ENCODE measurements at regions of chr16 and their contacts with region 1.

Region 1: GRCh38 chr16:75555707-75556430 is at the start of gene TMEM231:
- DNase-seq: peak; percentile 99
- H3K4me3 ChIP-seq: peak within 1 kb of the TSS; percentile 59 to 100 (median 81)
- H3K27ac ChIP-seq: peak within 1 kb of the TSS; percentile 38 to 84 (median 80)
- H3K4me1 ChIP-seq: peaks cover 6 to 31% (median 20%) of the 10 kb centered on the region in 6 donors
- H3K27me3 ChIP-seq: peaks cover 0 to 5% (median 0%) of the 10 kb centered on the region in 7 donors
- CTCF ChIP-seq: peak in 2 of 11 experiments; percentile 7 to 32
- POLR2A ChIP-seq: no peak
- total RNA-seq, gene TMEM231: 2.7 to 6.7 (median 3.5) TPM

Region 2: GRCh38 chr16:75464130-75464918 is 91.5 kb before region 1 on chr16 and contains the start of gene TMEM170A:
- intact Hi-C with region 1: loop called (anchors 10 kb)
- DNase-seq: peak; percentile 100
- H3K4me3 ChIP-seq: peak within 1 kb of the TSS; percentile 83 to 97 (median 93)
- H3K27ac ChIP-seq: peak within 1 kb of the TSS; percentile 96 to 100 (median 98)
- H3K4me1 ChIP-seq: peaks cover 0 to 63% (median 38%) of the 10 kb centered on the region in 6 donors
- H3K27me3 ChIP-seq: no peaks in the 10 kb centered on the region
- CTCF ChIP-seq: peak; percentile 100
- POLR2A ChIP-seq: peak; percentile 72 to 88 (median 88)
- total RNA-seq, gene TMEM170A: 26.3 to 54.0 (median 34.2) TPM

Region 3: GRCh38 chr16:75495076-75495674 is 60.7 kb before region 1 on chr16 and contains the start of gene CHST6:
- intact Hi-C with region 1: no loop called
- DNase-seq: peak; percentile 78
- H3K4me3 ChIP-seq: peak within 1 kb of the TSS; percentile 18 to 63 (median 28)
- H3K27ac ChIP-seq: no peak within 1 kb of the TSS
- H3K4me1 ChIP-seq: peaks cover 0 to 24% (median 10%) of the 10 kb centered on the region in 6 donors
- H3K27me3 ChIP-seq: peaks cover 0 to 56% (median 19%) of the 10 kb centered on the region in 7 donors
- CTCF ChIP-seq: no peak
- POLR2A ChIP-seq: no peak
- total RNA-seq, gene CHST6: 0.17 to 0.66 (median 0.26) TPM in 6 of 7 donors, not detected in the other